A673 (cell line): ENCODE measurements at regions of chr10 and their contacts with region 1.

Region 1: DNA sequence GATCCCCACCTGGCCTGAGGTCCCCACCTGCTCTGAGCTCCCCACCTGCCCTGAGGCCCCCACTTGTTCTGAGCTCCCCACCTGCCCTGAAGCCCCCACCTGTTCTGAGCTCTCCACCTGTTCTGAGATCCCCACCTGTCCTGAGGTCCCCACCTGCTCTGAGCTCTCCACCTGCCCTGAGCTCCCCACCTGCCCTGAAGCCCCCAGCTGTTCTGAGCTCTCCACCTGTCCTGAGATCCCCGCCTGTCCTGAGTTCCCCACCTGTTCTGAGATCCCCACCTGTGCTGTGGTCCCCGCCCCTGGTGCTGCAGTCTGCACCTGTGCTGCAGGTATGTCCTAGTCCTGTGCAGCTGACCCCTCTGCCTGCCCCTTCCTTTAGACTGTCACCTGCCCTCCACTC is 561.6 kb downstream of the TCERG1L start:
- DNase-seq: no peak
- H3K4me3 ChIP-seq: no peak overlapping the region
- H3K27ac ChIP-seq: no peak overlapping the region
- H3K4me1 ChIP-seq: peaks cover 27% of the 10 kb centered on the region
- H3K27me3 ChIP-seq: no peaks in the 10 kb centered on the region
- CTCF ChIP-seq: no peak

Region 2: GRCh38 chr10:131083915-131084790 is 334.2 kb after region 1 on chr10:
- CTCF ChIA-PET with region 1: no interaction called
- POLR2A ChIA-PET with region 1: no interaction called
- intact Hi-C with region 1: no loop called
- DNase-seq: peak; percentile 36
- H3K4me3 ChIP-seq: no peak overlapping the region
- H3K27ac ChIP-seq: no peak overlapping the region
- H3K4me1 ChIP-seq: no peaks in the 10 kb centered on the region
- H3K27me3 ChIP-seq: no peaks in the 10 kb centered on the region
- CTCF ChIP-seq: peak; percentile 54

Region 3: DNA sequence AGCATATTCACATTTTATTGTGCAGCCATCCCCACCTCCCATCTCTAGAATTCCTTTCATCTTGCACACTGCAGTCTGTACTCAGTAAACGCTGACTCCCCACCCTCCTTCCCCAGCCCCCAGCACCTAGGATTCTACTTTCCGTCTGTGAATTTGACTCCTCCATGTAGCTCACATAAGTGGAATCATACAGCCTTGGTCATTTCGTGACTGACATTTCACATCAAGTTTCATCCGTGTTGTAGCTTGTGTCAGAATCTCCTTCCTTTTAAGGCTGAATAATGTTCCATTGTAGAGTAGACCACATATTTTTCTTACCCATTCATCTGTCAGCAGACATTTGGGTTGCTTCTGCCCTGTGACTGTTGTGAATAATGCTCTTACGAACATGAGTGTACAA is 587.8 kb after region 1 on chr10:
- CTCF ChIA-PET with region 1: no interaction called
- POLR2A ChIA-PET with region 1: no interaction called
- intact Hi-C with region 1: loop called (anchors 10 kb)
- DNase-seq: no peak
- H3K4me3 ChIP-seq: no peak overlapping the region
- H3K27ac ChIP-seq: peak overlapping the region; percentile 62
- H3K4me1 ChIP-seq: peaks cover 22% of the 10 kb centered on the region
- H3K27me3 ChIP-seq: no peaks in the 10 kb centered on the region
- CTCF ChIP-seq: no peak